ENCODE measurements at regions of chr13 and their contacts with region 1.

Region 1: GRCh38 chr13:41075034-41075433 is 13.7 kb downstream of the WBP4 start:
- DNase-seq: peak in 1 of 2 donors; percentile 21
- ATAC-seq: no peak

Region 2: GRCh38 chr13:41216160-41216559 is 141.1 kb after region 1 on chr13:
- intact Hi-C with region 1: loop called (anchors 5 to 10 kb)
- DNase-seq: no peak
- ATAC-seq: no peak

Region 3: DNA sequence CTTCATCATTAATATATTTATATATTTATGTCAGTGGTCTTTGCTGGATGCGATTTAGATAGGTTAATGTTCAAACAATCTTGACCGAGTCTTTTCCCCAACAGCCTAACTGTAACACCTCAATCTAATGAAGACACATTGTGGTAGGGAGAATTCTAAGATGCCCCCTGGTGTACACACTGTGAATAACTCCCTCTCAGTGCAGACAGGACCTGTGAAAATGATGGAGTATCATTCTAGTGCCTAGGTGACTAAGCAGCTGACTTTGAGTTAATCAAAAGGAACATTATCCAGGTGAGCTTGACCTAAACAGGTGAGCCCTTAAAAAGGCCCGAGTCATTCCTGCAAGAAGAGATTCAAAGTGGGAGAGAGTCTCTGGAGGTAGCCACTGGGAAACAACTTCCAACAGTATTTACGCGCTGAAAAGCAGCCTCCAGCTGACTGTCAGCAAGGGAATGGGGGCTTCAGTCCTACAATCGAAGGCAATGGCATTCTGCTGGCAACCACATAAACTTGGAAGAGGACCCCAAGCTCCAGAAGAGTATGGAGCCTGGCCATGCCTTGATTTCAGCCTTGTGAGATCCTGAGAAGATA is 147.3 kb after region 1 on chr13:
- intact Hi-C with region 1: loop called (anchors 5 to 10 kb)
- DNase-seq: peak; percentile 30 to 46
- ATAC-seq: peak; percentile 88

Region 4: GRCh38 chr13:41310963-41311606 is 236.1 kb after region 1 on chr13 and contains the start of gene NAA16:
- intact Hi-C with region 1: no loop called
- DNase-seq: peak; percentile 86 to 91
- ATAC-seq: peak; percentile 90
- total RNA-seq, gene NAA16: 11.1 to 12.6 TPM

Region 5: GRCh38 chr13:41931337-41931736 is 856.3 kb after region 1 on chr13:
- intact Hi-C with region 1: no loop called
- DNase-seq: no peak
- ATAC-seq: no peak

Measured in left colon (tissue), 2 donors.